A549 (cell line): ENCODE measurements at regions of chr11 and their contacts with region 1.

Region 1: GRCh38 chr11:111777094-111778046 is 11.2 kb upstream of the PPP2R1B start:
- DNase-seq: peak; percentile 47 to 66
- ATAC-seq: peak; percentile 92 to 98
- H3K4me3 ChIP-seq: no peak overlapping the region
- H3K27ac ChIP-seq: no peak overlapping the region
- H3K4me1 ChIP-seq: no peaks in the 10 kb centered on the region
- CTCF ChIP-seq: peak; percentile 73
- EP300 ChIP-seq: no peak
- POLR2A ChIP-seq: no peak
- RAD21 ChIP-seq: peak; percentile 76 to 84

Region 2: DNA sequence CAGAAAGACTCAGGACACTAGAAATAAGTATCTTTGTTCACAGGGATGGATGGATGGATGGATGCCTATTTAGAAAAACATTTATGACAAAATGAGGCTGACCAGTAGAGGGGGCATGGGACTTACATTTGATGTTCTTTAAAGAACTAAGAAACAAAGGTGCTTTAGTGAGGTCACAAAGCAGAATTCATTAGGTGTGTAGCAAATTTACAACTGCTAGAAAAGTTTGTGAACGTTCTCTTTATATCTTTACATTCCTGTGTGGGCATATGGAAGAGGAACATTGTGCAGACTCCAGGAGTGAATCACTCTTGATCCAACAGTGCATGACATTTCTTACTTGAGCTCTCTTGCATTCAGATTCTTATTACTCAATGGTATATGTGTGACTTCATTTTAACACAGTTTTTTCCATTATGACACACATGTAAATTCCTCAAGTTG is 191.0 kb before region 1 on chr11:
- CTCF ChIA-PET with region 1: interaction called, 59 read pairs
- POLR2A ChIA-PET with region 1: no interaction called
- DNase-seq: peak in 1 of 2 experiments; percentile 56
- ATAC-seq: peak; percentile 68 to 81; a peak in 5 of 6 replicates
- H3K4me3 ChIP-seq: no peak overlapping the region
- H3K27ac ChIP-seq: no peak overlapping the region
- H3K4me1 ChIP-seq: no peaks in the 10 kb centered on the region
- CTCF ChIP-seq: peak; percentile 62
- EP300 ChIP-seq: no peak
- POLR2A ChIP-seq: no peak
- RAD21 ChIP-seq: peak; percentile 67 to 76

Region 3: GRCh38 chr11:111730871-111731591 is 46.3 kb before region 1 on chr11:
- CTCF ChIA-PET with region 1: interaction called, 10 read pairs
- POLR2A ChIA-PET with region 1: no interaction called
- DNase-seq: peak in 1 of 2 experiments; percentile 62
- ATAC-seq: peak; percentile 49 to 62
- H3K4me3 ChIP-seq: no peak overlapping the region
- H3K27ac ChIP-seq: peak overlapping the region; percentile 55 to 82; a peak in 4 of 6 replicates
- H3K4me1 ChIP-seq: peaks cover 45% of the 10 kb centered on the region
- CTCF ChIP-seq: no peak
- EP300 ChIP-seq: no peak
- POLR2A ChIP-seq: no peak
- RAD21 ChIP-seq: no peak

Region 4: GRCh38 chr11:111766093-111766833 is 11.1 kb before region 1 on chr11 and contains the start of gene PPP2R1B:
- CTCF ChIA-PET with region 1: interaction called, 49 read pairs
- POLR2A ChIA-PET with region 1: interaction called, 4 read pairs
- DNase-seq: peak; percentile 62 to 82
- ATAC-seq: peak; percentile 96 to 97
- H3K4me3 ChIP-seq: peak within 1 kb of the TSS; percentile 97
- H3K27ac ChIP-seq: peak within 1 kb of the TSS; percentile 79 to 94
- H3K4me1 ChIP-seq: peaks cover 13% of the 10 kb centered on the region; the same call in 1 of the 3 replicates
- CTCF ChIP-seq: no peak
- EP300 ChIP-seq: no peak
- POLR2A ChIP-seq: peak; percentile 82
- RAD21 ChIP-seq: no peak
- polyA plus RNA-seq, gene PPP2R1B: 24.7 and 26.3 TPM in 2 replicates

Region 5: DNA sequence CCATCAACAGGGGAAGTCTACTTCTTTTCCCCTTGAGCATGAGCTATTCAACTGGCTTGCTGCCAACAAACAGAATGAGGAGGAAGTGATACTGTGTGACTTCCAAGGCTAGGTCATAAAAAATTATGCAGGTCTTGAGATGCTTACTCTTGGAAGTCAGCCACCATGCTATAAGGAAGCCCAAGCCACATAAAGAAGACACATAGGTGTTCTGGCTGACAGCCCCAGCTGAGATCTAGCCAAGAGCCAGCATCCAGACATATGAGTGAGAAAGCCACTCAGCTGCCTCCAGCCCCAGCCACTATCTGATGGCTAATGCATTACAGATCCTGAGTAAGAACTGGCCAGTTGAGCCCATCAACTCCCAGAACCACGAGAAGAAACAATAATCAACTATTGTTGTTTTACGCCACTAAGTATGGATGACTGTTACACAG is 19.8 kb after region 1 on chr11:
- CTCF ChIA-PET with region 1: interaction called, 23 read pairs
- POLR2A ChIA-PET with region 1: no interaction called
- DNase-seq: peak in 1 of 2 experiments; percentile 10
- ATAC-seq: no peak
- H3K4me3 ChIP-seq: no peak overlapping the region
- H3K27ac ChIP-seq: no peak overlapping the region
- H3K4me1 ChIP-seq: no peaks in the 10 kb centered on the region
- CTCF ChIP-seq: no peak
- EP300 ChIP-seq: no peak
- POLR2A ChIP-seq: no peak
- RAD21 ChIP-seq: no peak

Region 6: GRCh38 chr11:111855506-111855905 is 78.1 kb after region 1 on chr11:
- CTCF ChIA-PET with region 1: no interaction called
- POLR2A ChIA-PET with region 1: no interaction called
- DNase-seq: no peak
- ATAC-seq: no peak
- H3K4me3 ChIP-seq: no peak overlapping the region
- H3K27ac ChIP-seq: no peak overlapping the region
- H3K4me1 ChIP-seq: no peaks in the 10 kb centered on the region
- CTCF ChIP-seq: no peak
- EP300 ChIP-seq: no peak
- POLR2A ChIP-seq: no peak
- RAD21 ChIP-seq: no peak